ENCODE measurements at regions of chr12 and their contacts with region 1.

Region 1: DNA sequence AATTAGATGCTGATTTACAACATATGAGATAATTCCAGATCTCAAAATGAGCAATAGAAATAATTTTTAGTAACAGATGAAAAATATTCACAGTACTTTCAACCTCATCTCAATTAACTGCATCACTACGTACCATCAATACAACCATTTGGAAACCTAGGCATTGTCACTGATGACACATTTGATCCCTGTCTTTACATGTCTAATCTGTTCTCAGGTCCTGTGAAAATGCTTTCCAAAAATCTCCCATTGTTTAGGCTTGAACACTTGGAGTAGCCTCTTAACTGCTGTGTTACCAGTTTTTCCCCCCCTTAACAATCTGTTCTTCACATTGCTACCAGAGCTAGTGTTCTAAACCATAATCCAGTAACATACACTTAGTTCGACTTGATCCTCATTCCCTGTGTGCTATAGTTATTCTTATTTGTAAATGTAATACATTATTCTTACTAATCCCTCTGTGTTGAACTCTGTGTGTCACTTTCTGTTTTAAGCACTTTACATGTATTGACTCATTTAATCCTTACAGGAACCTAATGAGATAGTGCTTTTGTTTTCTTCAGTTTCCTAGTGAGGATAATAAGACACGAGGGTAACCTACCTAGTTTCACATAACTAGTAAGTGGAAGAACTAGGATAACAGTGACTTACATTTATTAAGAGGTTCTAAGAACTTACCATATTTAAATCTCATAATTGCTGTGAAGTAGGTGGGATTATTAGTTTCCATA is 41.7 kb downstream of the LARP4 start:
- DNase-seq: no peak
- ATAC-seq: no peak

Region 2: GRCh38 chr12:50477241-50477832 is 35.0 kb after region 1 on chr12:
- intact Hi-C with region 1: loop called (anchors 5 kb)
- DNase-seq: no peak
- ATAC-seq: no peak